Right ventricle myocardium superior (tissue), 1 donor: ENCODE measurements at regions of chr21 and their contacts with region 1.

Region 1: DNA sequence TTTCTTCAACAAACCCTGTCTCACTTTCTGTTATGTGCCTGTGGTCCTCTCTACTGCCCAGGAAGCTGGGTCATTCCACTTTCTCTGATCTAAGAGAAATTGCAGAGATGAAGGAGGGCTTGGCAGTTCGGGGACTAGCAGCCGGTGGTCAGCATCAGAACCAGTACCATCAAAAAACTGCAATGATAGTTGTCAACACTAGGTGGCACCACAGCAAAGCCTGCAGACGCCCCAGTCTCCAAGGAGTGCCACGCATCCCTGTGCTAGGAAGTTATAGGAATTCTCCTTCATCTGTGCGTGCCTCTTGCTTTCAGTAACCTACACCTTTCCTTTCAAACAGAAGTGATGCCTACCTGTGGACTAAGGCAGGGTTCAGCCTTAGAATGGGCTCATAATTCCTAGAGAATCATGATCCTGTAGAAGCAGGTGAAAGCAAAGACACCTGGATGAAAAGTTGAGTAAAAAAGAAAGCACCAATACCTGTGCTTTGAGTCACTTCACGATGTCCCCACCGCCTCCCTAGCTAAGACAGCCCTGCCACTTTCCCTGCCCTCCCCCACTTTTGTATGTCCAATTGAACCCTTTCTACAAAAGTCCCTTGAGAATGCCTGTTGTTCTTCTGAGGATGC is 129.2 kb downstream of the ADAMTS1 start:
- DNase-seq: no peak
- ATAC-seq: peak; percentile 77

Region 2: GRCh38 chr21:25881525-25882376 is 834.2 kb before region 1 on chr21:
- intact Hi-C with region 1: loop called (anchors 5 kb)
- DNase-seq: peak; percentile 78
- ATAC-seq: peak; percentile 89

Region 3: DNA sequence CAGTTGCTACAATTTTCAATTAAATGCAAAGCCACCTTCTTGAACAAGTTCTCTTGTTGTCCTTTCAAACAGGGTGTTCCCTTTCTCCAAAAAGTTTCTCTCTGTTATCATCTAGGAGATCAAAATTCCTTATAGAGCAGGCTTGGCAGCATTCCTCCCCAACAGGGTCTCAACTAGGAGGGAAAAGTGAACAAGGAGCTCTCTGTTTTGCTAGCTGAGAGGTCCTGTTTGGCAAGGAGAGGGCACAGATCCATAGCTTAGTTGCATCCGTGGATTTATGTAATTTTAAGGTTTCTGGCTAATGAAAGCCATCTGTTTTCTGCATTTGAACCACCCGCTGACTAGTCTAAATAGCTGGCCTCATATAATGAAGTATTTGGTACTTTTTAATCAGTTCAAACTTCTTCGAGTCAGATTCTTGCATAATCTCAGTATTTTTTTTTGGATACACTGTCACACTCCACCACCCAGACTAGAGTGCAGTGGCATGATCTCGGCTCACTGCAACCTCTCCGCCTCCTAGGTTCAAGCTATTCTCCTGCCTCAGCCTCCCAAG is 599.5 kb before region 1 on chr21:
- intact Hi-C with region 1: no loop called
- DNase-seq: no peak
- ATAC-seq: peak; percentile 70

Region 4: GRCh38 chr21:26212211-26212610 is 503.8 kb before region 1 on chr21:
- intact Hi-C with region 1: no loop called
- DNase-seq: no peak
- ATAC-seq: no peak

Region 5: DNA sequence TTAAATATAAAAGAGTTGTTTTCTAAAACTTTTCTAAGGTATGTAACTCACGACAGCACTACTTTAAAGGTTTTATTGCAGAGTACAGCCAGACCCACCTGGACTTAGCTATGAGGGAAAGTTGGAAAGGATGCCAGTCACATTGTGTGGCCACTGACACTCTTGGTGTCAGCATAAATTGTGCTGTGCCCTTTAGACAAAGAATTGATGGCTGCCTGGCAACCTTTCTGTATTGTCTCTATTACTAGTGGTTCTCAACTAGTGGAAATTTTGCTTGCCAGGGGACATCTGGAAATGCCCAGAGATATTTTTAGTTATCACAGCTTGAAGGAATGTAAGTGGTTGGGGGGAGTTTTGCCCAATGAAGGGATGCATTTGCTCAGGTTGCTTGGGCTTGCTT is 428.0 kb before region 1 on chr21:
- intact Hi-C with region 1: no loop called
- DNase-seq: no peak
- ATAC-seq: peak; percentile 51

Region 6: DNA sequence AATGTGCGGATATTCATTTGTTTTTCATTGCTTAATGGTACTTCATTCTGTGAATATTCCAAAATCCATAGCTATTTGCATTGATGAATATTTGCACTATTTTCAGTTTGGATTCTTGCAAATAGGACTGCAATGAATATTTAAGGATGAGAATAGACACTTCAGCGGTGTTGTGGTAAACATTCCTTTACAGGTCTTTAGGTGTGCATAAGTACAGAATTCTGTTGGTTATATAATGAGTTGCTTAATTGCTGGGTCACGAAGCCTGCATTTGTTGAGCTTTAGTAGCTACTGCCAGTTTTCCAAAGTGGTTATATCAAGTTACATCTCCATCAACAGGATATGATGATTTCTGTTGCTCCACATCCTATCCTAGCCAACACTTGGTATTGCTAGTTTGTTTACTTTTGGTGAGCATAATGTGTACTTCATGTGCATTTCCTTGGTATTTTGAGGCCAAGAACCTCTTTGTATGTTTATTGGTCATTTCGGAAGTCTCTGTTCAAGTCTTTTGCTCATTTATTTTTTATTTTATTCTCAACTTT is 78.7 kb before region 1 on chr21:
- intact Hi-C with region 1: no loop called
- DNase-seq: no peak
- ATAC-seq: no peak